ENCODE measurements at regions of chr20 and their contacts with region 1.

Region 1: DNA sequence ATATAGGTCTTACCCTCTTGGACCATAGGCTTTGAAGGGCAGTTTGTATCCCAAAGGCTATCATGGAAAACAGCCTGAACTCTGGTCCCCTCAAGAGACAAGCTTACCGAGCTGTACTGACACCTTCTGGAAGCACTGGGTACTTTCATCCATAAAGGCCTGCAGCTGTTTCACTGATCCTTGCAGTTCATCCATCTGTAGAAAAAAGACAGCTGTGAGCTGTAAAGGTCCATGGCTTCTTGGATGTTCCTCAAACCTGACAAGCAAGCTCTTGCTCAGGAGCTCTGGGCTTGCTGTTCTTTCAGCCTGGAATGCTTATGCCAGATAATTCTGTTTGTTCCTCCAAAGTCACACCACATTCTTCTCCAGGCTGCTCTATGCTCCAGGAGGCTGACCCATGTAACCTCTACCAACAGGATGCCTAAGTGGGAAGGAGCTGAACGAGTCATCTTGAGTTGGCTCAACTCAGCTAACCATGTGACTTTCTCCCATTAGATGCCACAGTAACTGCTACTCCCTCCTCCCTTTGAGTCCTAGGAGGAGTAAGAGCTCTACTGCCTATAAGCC is 8.8 kb upstream of the NDRG3 start:
- DNase-seq: peak; percentile 47
- H3K4me3 Mint-ChIP-seq: no peak overlapping the region
- H3K27ac Mint-ChIP-seq: no peak overlapping the region
- H3K4me1 Mint-ChIP-seq: peaks cover 4% of the 10 kb centered on the region
- H3K27me3 Mint-ChIP-seq: no peaks in the 10 kb centered on the region

Region 2: GRCh38 chr20:36613974-36614373 is 140.8 kb before region 1 on chr20:
- CTCF ChIA-PET with region 1: interaction called, 33 read pairs
- POLR2A ChIA-PET with region 1: no interaction called
- intact Hi-C with region 1: loop called (anchors 5 kb)
- DNase-seq: no peak
- H3K4me3 Mint-ChIP-seq: no peak overlapping the region
- H3K27ac Mint-ChIP-seq: peak overlapping the region; percentile 28
- H3K4me1 Mint-ChIP-seq: peaks cover 12% of the 10 kb centered on the region
- H3K27me3 Mint-ChIP-seq: no peaks in the 10 kb centered on the region

Region 3: GRCh38 chr20:36717657-36718056 is 37.1 kb before region 1 on chr20:
- CTCF ChIA-PET with region 1: interaction called, 14 read pairs
- POLR2A ChIA-PET with region 1: no interaction called
- intact Hi-C with region 1: no loop called
- DNase-seq: no peak
- H3K4me3 Mint-ChIP-seq: no peak overlapping the region
- H3K27ac Mint-ChIP-seq: no peak overlapping the region
- H3K4me1 Mint-ChIP-seq: peaks cover 10% of the 10 kb centered on the region
- H3K27me3 Mint-ChIP-seq: no peaks in the 10 kb centered on the region

Region 4: GRCh38 chr20:36728986-36729385 is 25.8 kb before region 1 on chr20:
- CTCF ChIA-PET with region 1: interaction called, 19 read pairs
- POLR2A ChIA-PET with region 1: no interaction called
- intact Hi-C with region 1: no loop called
- DNase-seq: peak; percentile 26
- H3K4me3 Mint-ChIP-seq: no peak overlapping the region
- H3K27ac Mint-ChIP-seq: no peak overlapping the region
- H3K4me1 Mint-ChIP-seq: peaks cover 22% of the 10 kb centered on the region
- H3K27me3 Mint-ChIP-seq: no peaks in the 10 kb centered on the region

Region 5: GRCh38 chr20:36736451-36737182 is 18.1 kb before region 1 on chr20:
- CTCF ChIA-PET with region 1: interaction called, 19 read pairs
- POLR2A ChIA-PET with region 1: no interaction called
- intact Hi-C with region 1: no loop called
- DNase-seq: no peak
- H3K4me3 Mint-ChIP-seq: no peak overlapping the region
- H3K27ac Mint-ChIP-seq: no peak overlapping the region
- H3K4me1 Mint-ChIP-seq: peaks cover 27% of the 10 kb centered on the region
- H3K27me3 Mint-ChIP-seq: no peaks in the 10 kb centered on the region

Region 6: DNA sequence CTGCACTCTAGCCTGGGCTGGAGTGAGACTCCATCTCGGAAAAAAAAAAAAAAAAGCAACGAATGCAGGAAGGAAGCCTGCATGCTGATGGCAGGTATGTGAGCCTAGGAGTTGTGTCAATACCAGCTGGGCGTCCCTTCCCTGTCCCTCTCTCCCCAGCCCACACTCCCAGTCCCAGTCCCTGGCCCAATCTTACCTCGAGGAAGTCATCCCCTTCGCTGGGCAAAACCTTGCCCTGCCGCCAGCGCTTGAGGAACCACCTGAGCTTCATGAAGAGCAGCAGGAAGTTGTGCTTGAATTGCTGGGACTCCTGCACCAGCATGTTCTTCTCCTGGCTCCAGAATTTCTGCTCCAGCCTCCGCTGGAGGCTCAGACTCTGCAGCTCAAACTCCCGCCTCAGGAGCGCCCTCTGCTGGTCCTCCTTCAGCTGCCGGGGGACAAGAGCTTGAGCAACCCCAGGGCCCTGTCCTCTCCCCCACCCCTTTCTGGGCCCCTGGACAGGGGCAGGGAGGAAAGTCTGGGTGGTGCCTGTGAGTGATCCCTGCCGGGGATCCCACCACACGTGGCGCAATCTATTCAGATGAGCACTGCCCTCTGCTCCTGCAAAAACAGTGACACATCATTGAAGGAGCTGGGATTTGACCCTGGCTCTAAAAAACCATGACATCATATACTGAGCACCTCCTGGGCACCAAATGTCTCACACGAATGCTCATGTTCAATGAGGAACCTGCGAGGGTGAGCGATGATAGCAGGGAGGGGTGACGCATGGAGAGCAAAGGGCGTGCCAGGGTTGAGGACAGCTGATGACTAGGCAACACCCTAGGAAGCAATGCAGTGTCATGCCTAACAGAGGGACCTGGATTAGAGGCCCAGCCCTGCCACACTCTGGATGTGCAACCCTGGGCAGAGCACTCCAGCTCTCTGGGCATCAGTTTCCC is 53.8 kb after region 1 on chr20:
- CTCF ChIA-PET with region 1: interaction called, 13 read pairs
- POLR2A ChIA-PET with region 1: no interaction called
- intact Hi-C with region 1: no loop called
- DNase-seq: peak; percentile 83
- H3K4me3 Mint-ChIP-seq: no peak overlapping the region
- H3K27ac Mint-ChIP-seq: peak overlapping the region; percentile 54
- H3K4me1 Mint-ChIP-seq: peaks cover 3% of the 10 kb centered on the region
- H3K27me3 Mint-ChIP-seq: no peaks in the 10 kb centered on the region

Measured in activated CD4-positive, alpha-beta memory T cell treated with anti-CD3 and anti-CD28 coated beads for 36 hours (primary cell).